ENCODE measurements at regions of chr17 and their contacts with region 1.

Region 1: GRCh38 chr17:50956750-50957523 is 90.8 kb upstream of the TOB1 start:
- DNase-seq: peak; percentile 54 to 69 (median 69)
- H3K4me3 ChIP-seq: no peak overlapping the region
- H3K4me3 Mint-ChIP-seq: no peak overlapping the region
- H3K27ac ChIP-seq: no peak overlapping the region
- H3K27ac Mint-ChIP-seq: peak overlapping the region in 3 of 7 donors; percentile 21 to 75 (median 61)
- H3K4me1 ChIP-seq: peaks cover 4 to 12% of the 10 kb centered on the region in 2 donors
- H3K4me1 Mint-ChIP-seq: peaks cover 19% of the 10 kb centered on the region
- H3K27me3 ChIP-seq: no peaks in the 10 kb centered on the region
- H3K27me3 Mint-ChIP-seq: peaks cover 4 to 12% (median 6%) of the 10 kb centered on the region in 3 donors
- CTCF ChIP-seq: peak; percentile 89

Region 2: GRCh38 chr17:50853015-50853615 is 103.8 kb before region 1 on chr17:
- intact Hi-C with region 1: loop called (anchors 2 kb)
- DNase-seq: no peak
- H3K4me3 ChIP-seq: no peak overlapping the region
- H3K4me3 Mint-ChIP-seq: no peak overlapping the region
- H3K27ac ChIP-seq: no peak overlapping the region
- H3K27ac Mint-ChIP-seq: peak overlapping the region in 2 of 7 donors; percentile 6 to 85
- H3K4me1 ChIP-seq: peaks cover 28 to 31% of the 10 kb centered on the region in 2 donors
- H3K4me1 Mint-ChIP-seq: peaks cover 36% of the 10 kb centered on the region
- H3K27me3 ChIP-seq: no peaks in the 10 kb centered on the region
- H3K27me3 Mint-ChIP-seq: peaks cover 0 to 1% (median 0%) of the 10 kb centered on the region in 3 donors
- CTCF ChIP-seq: no peak

Measured in CD14-positive monocyte (primary cell).